IMR-90 (cell line): ENCODE measurements at regions of chr17 and their contacts with region 1.

Region 1: DNA sequence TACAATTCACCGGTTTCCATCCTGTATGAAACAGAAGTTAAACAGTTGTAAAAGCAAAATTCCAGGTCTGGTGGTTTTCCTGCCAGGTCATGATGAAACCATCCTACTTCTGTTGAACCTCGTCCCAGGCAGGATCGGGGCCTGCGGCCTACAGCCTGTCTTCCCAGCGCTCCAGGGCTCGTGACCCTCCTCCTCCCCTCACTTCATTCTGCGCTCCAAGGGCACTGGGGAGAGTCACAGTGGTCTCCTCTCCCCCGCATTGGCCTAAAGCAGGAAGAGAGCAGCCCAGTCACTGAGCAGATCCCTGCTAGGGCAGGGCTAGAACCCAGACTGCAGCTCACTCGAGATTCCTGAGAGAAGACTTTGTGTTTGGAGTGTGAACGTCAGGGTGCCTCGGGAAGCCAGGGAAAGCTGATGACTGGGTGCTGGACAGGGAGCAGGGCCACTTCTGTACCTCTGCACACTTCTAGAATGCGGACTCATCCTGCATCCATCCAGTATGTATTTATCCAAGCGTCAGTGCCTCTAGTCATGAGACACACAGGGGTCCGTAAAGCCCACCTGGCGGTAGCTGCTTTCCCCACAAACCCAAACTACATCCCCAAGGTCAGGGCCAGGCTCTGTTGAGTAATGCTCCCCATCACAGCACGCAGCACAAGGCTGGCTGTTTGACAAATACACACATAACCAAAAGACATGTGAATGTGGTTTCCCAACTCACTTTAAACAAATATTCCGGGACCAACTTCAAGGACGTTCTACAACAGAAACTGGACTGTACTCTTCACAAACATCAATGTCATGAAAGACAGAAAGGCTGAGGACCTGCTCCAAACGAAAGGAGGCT is 1.7 kb upstream of the ITGAE start:
- DNase-seq: peak; percentile 90
- ATAC-seq: peak; percentile 73
- H3K4me3 ChIP-seq: no peak overlapping the region
- H3K27ac ChIP-seq: peak overlapping the region; percentile 87
- H3K4me1 ChIP-seq: peaks cover 25% of the 10 kb centered on the region
- H3K27me3 ChIP-seq: no peaks in the 10 kb centered on the region
- CTCF ChIP-seq: no peak
- POLR2A ChIP-seq: no peak
- RAD21 ChIP-seq: no peak

Region 2: DNA sequence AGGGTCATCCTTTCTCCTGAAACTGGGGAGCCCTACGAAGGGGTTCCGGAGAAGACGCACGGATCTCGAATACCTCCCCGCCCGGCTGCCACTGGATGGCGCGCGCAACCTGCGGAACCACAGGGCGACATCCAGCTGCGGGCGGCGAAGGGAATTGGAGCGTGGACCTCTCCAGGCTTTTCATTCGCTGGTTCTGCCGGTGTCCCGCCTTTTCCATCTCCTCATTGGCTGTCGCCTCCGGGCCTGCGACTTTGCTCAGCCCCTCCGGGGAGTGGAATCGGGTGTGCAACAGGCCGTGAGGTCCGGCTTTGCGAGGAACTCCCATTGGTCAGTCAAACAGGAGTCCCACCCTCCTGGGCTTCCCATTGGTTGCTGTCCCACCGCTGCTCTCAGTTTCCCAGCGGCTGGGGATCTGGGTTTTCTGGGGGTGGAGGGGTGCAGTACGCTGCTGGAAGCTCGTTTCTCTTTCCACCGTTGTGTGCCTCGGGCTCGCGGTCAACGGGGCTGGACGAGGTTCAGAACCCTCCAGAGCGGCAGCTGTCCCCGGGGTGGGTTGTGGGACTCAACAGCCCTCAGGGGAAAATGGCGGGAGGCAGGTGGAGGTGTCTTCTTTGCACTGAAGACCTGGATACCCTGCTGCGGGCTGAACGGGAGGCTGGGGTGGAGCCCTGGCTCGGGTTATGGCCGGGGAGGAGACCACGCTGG is 753.8 kb before region 1 on chr17:
- CTCF ChIA-PET with region 1: no interaction called
- POLR2A ChIA-PET with region 1: no interaction called
- dilution Hi-C with region 1: no loop called
- in situ Hi-C with region 1: loop called (anchors 25 kb)
- intact Hi-C with region 1: no loop called
- DNase-seq: peak; percentile 97
- ATAC-seq: peak; percentile 100
- H3K4me3 ChIP-seq: peak overlapping the region; percentile 69
- H3K27ac ChIP-seq: peak overlapping the region; percentile 61
- H3K4me1 ChIP-seq: no peaks in the 10 kb centered on the region
- H3K27me3 ChIP-seq: no peaks in the 10 kb centered on the region
- CTCF ChIP-seq: peak; percentile 64
- POLR2A ChIP-seq: no peak
- RAD21 ChIP-seq: peak; percentile 71

Region 3: GRCh38 chr17:3730881-3731429 is 71.7 kb before region 1 on chr17:
- CTCF ChIA-PET with region 1: no interaction called
- POLR2A ChIA-PET with region 1: interaction called, 21 read pairs
- dilution Hi-C with region 1: no loop called
- in situ Hi-C with region 1: no loop called
- intact Hi-C with region 1: no loop called
- DNase-seq: peak; percentile 42
- ATAC-seq: peak; percentile 58
- H3K4me3 ChIP-seq: no peak overlapping the region
- H3K27ac ChIP-seq: peak overlapping the region; percentile 91
- H3K4me1 ChIP-seq: peaks cover 16% of the 10 kb centered on the region
- H3K27me3 ChIP-seq: no peaks in the 10 kb centered on the region
- CTCF ChIP-seq: no peak
- POLR2A ChIP-seq: no peak
- RAD21 ChIP-seq: no peak

Region 4: GRCh38 chr17:3750926-3751325 is 51.8 kb before region 1 on chr17:
- CTCF ChIA-PET with region 1: no interaction called
- POLR2A ChIA-PET with region 1: no interaction called
- dilution Hi-C with region 1: no loop called
- in situ Hi-C with region 1: no loop called
- intact Hi-C with region 1: no loop called
- DNase-seq: no peak
- ATAC-seq: no peak
- H3K4me3 ChIP-seq: no peak overlapping the region
- H3K27ac ChIP-seq: no peak overlapping the region
- H3K4me1 ChIP-seq: no peaks in the 10 kb centered on the region
- H3K27me3 ChIP-seq: peaks cover 44% of the 10 kb centered on the region
- CTCF ChIP-seq: no peak
- POLR2A ChIP-seq: no peak
- RAD21 ChIP-seq: no peak